ENCODE measurements at regions of chr1 and their contacts with region 1.

Region 1: GRCh38 chr1:171081314-171081753 is 9.4 kb upstream of the FMO3 start:
- ATAC-seq: peak in 3 of 8 experiments; percentile 44 to 68 (median 58)
- H3K4me3 ChIP-seq: no peak overlapping the region
- H3K27ac ChIP-seq: no peak overlapping the region
- H3K4me1 ChIP-seq: no peaks in the 10 kb centered on the region

Region 2: DNA sequence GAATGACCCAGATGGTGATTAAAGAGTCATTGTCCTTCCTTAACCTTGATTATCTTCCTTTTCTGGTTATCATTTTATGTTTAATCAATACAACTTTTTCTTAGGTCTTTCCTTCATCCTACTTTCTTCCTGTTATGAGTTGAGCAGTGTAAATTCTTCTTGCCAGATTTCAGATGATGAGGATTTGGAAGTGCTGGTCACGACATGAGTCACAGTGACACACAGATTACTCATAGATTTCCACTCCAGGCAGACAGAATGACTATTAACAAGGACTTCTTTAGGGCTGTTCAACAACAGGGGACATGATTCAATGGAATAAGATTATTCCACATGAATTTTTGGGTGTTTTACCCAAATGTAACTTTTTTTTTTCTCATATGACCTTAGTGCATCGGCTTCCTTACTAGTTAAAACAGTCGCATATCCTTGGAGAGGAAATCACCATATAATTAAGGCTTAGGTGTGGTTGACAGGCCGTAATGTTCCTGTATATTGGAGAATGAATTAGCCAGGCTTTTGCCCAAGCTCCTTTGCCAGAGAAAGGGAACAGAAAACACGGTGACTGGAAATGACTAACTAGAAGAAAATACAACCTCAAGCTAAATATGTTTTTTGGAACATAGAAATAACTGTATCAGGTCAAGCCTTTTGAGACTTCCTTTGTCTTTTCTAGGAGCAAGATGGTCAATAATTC is 373.2 kb before region 1 on chr1:
- in situ Hi-C with region 1: loop called in 1 of 9 experiments (anchors 25 kb)
- ATAC-seq: peak in 7 of 8 experiments; percentile 27 to 99 (median 86)
- H3K4me3 ChIP-seq: no peak overlapping the region
- H3K27ac ChIP-seq: no peak overlapping the region
- H3K4me1 ChIP-seq: no peaks in the 10 kb centered on the region

Region 3: DNA sequence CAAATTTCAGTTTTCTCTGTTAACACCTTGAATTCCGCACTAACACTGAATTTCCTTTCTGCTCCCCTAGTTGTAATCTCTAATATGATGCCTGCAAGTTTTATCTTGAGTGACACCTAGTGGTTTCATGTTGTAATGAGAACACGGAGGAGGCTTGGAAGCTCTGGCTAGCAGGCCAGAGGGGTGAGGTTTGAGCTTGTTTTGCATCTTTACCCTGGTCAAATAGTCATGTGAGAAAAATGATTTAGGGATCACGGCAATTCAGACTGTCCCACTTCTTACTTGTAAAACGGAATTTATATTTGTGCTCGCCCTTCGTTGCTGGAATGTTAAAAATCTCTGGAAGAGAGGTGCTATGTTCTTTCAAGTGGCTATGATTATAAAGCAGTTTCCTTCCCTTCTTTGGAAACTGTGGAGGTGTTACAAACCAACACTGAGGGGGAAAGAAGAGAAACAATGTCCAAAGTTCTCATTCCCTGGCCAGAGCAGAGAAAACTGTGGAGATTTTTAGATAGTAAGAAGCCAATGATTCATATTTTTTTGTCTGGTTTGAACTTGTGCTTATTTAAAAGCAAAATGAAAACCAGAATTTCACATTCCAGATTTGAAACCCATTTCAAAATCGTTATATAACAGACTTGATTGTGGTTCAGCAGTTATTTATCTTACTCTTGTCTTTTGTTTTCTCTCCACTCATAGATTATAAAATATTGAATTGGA is 151.3 kb before region 1 on chr1:
- in situ Hi-C with region 1: no loop called
- ATAC-seq: peak; percentile 89 to 98 (median 92)
- H3K4me3 ChIP-seq: no peak overlapping the region
- H3K27ac ChIP-seq: no peak overlapping the region
- H3K4me1 ChIP-seq: no peaks in the 10 kb centered on the region

Region 4: GRCh38 chr1:171188388-171189266 is 107.3 kb after region 1 on chr1:
- in situ Hi-C with region 1: loop called in 1 of 9 experiments (anchors 5 kb)
- ATAC-seq: peak in 3 of 8 experiments; percentile 73 to 94 (median 91)
- H3K4me3 ChIP-seq: no peak overlapping the region
- H3K27ac ChIP-seq: no peak overlapping the region
- H3K4me1 ChIP-seq: no peaks in the 10 kb centered on the region

Region 5: DNA sequence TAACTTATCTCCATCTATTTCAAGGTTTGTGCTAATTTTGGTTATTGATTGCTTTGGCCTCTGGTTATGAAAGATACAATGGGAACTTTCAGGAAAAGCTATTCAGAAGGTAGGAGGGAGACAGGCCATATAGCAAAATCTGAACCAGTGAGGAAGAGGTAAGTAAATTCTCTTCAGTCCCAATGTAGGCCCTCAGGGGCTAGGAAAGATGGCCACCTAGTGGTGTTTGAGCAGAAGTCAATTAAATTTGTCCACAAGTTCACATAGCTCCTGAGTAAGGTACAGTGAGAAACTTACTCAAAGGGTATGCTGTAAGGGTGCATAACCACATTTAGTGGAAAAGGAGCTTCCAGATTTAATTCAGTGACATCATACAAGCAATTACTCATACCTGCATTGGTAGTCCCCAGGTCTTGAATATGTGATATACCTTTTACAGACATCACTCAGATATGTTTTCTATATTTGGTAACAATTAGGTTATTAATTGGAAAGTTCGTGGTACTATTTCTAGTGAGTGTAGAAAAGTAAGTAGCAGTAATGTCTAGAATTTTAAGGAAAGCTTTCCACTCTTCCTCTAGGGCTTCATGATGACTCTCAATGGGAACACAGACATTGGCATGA is 145.5 kb after region 1 on chr1:
- in situ Hi-C with region 1: loop called in 1 of 9 experiments (anchors 25 kb)
- ATAC-seq: peak; percentile 40 to 91 (median 70)
- H3K4me3 ChIP-seq: no peak overlapping the region
- H3K27ac ChIP-seq: no peak overlapping the region
- H3K4me1 ChIP-seq: no peaks in the 10 kb centered on the region

Measured in motor neuron (in vitro differentiated cells).